ENCODE measurements at regions of chr16 and their contacts with region 1.

Region 1: DNA sequence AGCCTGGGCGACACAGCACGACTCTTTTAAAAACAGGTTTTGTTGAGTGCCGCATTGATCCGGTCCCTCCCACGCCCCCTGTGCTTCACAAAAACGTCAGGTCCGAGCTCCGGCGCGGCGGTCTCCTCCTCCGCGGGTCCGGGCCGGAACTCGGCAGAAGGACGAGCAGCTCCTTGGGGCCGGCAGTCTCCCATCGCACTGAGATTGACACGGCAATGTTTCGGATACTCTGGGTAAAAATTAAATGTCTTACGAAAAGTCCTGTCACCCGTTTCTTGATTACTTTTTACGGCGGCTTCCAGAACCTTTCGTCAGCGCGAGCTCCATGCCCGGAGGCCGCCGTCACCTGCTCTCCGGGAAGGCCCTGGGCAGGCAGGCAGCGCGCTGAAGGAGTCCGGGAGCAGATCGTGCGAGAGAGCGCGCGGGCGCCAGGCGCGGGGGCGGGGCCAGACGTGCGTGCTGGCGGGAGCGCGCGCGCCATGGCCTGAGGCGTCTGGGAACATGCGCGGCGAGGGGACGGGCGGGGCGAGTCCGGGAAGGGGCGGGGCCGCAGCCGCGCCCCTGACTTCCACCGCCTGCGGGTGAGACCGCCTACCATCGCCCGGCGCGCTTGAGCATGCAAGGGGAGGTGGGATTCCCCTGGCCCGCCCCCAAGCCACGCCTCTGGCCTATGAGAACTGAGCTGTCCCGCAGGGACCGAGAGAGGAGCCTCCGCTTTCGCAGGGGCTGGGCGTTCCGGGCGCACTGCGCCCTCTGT is 11.7 kb upstream of the SRL start:
- DNase-seq: peak; percentile 100
- H3K4me3 Mint-ChIP-seq: peak overlapping the region; percentile 99
- H3K27ac Mint-ChIP-seq: peak overlapping the region; percentile 98
- H3K4me1 Mint-ChIP-seq: peaks cover 8% of the 10 kb centered on the region
- H3K27me3 Mint-ChIP-seq: no peaks in the 10 kb centered on the region

Region 2: DNA sequence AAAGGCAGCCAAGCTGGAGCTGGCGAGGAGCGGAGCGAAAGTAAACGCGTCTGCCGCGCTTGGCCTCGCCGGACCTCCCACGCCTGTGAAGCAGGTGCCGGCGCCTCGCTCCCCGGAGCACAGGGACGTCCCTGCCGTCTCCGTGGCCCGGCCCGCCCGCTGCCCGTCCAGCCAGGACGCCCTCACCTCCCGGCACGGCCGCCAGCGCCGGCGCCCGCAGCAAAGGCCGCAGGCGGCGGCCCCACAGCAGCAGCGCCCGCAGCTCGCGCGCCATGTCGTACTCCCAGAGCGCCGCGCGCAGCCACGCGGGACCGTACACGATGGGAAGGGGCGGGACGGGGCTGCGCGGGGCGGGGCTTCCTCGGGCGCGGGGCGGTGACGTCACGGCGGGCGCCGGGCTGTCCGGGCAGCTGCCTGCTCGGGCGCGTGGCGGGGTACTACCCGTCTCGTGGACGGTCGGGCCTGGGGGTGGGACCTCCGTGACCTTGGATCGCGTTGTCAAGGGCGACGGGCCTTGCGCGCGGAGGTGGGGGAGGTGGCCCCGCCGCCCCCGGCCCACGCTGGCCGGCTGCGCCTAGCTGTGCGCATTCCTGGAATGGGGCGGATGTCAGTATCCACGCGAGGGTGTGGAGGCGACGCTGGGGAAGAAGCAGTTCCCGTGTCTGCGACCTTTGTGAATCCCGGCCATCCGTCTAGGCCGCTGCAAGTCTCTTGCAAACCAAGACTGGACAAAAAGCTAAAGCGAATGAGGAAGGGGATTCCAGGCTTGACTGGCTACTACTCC is 536.1 kb before region 1 on chr16 and contains the start of gene TRAP1:
- CTCF ChIA-PET with region 1: no interaction called
- intact Hi-C with region 1: loop called (anchors 5 kb)
- DNase-seq: peak; percentile 92
- H3K4me3 Mint-ChIP-seq: peak within 1 kb of the TSS; percentile 91
- H3K27ac Mint-ChIP-seq: peak within 1 kb of the TSS; percentile 84
- H3K4me1 Mint-ChIP-seq: peaks cover 42% of the 10 kb centered on the region
- H3K27me3 Mint-ChIP-seq: no peaks in the 10 kb centered on the region
- total RNA-seq, gene TRAP1: 384 to 396 TPM

Region 3: DNA sequence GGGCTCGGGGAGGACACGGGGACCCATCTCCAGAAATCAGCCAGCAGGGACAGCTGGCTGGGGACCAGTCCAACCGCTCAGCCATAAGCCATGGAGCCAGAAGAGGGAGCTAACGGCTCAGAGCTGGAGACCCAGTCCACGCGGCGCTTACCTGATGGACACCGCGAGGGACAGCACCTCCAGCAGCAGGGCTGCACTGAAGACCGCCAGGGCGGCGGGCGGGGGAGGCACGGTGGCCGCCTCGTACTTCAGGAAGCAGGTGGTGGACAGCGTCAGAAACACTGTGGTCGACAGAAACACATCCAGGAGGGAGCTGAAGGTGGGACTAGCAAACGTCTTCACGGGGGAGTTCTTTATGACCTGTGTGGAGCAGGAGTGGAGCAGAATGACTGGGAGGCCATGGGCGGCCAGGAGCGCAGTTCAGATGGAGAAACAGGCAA is 270.5 kb before region 1 on chr16:
- CTCF ChIA-PET with region 1: interaction called, 20 read pairs
- intact Hi-C with region 1: loop called (anchors 1 kb)
- DNase-seq: peak; percentile 73
- H3K4me3 Mint-ChIP-seq: no peak overlapping the region
- H3K27ac Mint-ChIP-seq: no peak overlapping the region
- H3K4me1 Mint-ChIP-seq: peaks cover 4% of the 10 kb centered on the region
- H3K27me3 Mint-ChIP-seq: no peaks in the 10 kb centered on the region

Region 4: GRCh38 chr16:4032768-4033167 is 220.8 kb before region 1 on chr16:
- CTCF ChIA-PET with region 1: no interaction called
- intact Hi-C with region 1: no loop called
- DNase-seq: peak; percentile 36
- H3K4me3 Mint-ChIP-seq: no peak overlapping the region
- H3K27ac Mint-ChIP-seq: no peak overlapping the region
- H3K4me1 Mint-ChIP-seq: peaks cover 4% of the 10 kb centered on the region
- H3K27me3 Mint-ChIP-seq: no peaks in the 10 kb centered on the region

Region 5: DNA sequence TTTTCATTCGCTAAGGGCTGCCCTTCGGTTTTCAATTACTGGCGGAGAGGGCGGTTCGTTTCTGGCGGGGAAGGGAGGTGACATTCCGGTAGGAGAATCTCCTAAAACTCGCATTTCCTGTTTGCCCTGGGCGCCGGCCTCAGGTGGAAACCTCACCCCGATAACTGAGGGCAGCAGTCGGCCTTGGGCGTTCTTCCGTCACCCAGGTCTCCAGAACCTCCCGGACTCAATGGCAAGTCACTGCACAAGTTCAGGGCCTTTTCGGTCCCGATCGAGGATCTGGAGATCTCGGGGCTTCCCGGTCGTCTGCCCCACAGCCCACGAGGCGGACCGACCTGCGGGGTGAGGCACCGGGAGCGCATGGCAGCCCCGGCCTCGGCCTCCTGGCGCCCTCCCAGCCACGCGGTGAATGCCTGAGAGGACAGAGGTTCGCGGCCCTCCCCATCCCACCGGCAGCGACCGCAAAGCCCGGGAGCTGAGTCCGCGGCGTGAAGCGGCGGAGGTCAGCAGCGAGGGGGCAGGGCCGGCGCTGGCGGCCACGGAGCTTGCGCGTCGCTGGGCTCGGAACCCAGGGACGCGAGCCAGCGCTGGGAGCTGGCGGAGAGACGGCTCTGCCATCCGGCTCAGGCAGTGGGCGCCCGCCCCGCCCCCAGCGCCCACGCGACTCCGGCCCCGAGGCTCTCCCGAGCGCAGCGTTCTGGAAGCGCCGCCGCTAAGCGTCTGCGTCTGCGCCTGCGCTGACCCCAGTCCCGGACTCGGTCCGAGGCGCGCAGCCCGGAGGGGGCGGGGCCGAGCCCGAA is 70.1 kb before region 1 on chr16:
- CTCF ChIA-PET with region 1: interaction called, 3 read pairs
- intact Hi-C with region 1: loop called (anchors 1 kb)
- DNase-seq: peak; percentile 90
- H3K4me3 Mint-ChIP-seq: peak overlapping the region; percentile 78
- H3K27ac Mint-ChIP-seq: peak overlapping the region; percentile 84
- H3K4me1 Mint-ChIP-seq: peaks cover 7% of the 10 kb centered on the region
- H3K27me3 Mint-ChIP-seq: no peaks in the 10 kb centered on the region

Region 6: GRCh38 chr16:4307215-4308037 is 53.9 kb after region 1 on chr16:
- CTCF ChIA-PET with region 1: interaction called, 8 read pairs
- intact Hi-C with region 1: loop called (anchors 1 kb)
- DNase-seq: peak; percentile 95
- H3K4me3 Mint-ChIP-seq: peak overlapping the region; percentile 84
- H3K27ac Mint-ChIP-seq: peak overlapping the region; percentile 85
- H3K4me1 Mint-ChIP-seq: peaks cover 24% of the 10 kb centered on the region
- H3K27me3 Mint-ChIP-seq: no peaks in the 10 kb centered on the region

Region 7: GRCh38 chr16:4802659-4803287 is 549.2 kb after region 1 on chr16:
- CTCF ChIA-PET with region 1: no interaction called
- intact Hi-C with region 1: no loop called
- DNase-seq: peak; percentile 87
- H3K4me3 Mint-ChIP-seq: peak overlapping the region; percentile 77
- H3K27ac Mint-ChIP-seq: no peak overlapping the region
- H3K4me1 Mint-ChIP-seq: peaks cover 9% of the 10 kb centered on the region
- H3K27me3 Mint-ChIP-seq: no peaks in the 10 kb centered on the region

Measured in activated naive CD4-positive, alpha-beta T cell treated with anti-CD3 and anti-CD28 coated beads for 36 hours (primary cell).